CD8-positive, alpha-beta T cell (primary cell): ENCODE measurements at regions of chr15 and their contacts with region 1.

Region 1: DNA sequence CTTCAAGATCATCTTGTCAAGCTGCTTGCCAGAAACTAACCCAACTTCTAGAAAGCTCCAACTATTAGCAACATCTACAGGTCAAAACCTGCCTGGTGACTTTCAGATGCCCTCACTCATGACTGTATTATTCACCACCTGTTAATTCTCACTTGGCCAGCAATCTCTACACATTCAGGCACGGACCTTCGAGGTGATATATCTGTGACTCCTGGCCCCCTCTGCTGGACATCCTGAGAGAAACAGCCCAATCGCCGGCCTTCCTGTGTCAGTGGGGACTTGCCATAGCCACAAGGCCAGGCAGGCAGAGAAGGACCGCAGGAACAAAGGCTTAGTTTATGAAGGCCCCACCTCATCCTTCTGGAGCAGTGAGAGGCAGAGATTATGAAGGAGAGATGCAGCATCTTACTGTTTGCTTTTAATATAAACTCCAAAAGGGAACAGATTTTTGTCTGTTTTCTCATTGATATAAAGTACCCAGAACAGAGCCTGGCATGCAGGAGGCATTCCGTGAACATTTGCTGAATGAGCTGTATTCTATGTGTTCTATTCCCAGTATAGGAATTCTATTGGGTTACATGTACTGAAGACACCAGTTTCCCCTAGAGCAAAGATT is 24.4 kb upstream of the OCA2 start:
- DNase-seq: peak in 8 of 9 experiments; percentile 42 to 75 (median 56)
- ATAC-seq: peak; percentile 58
- H3K4me3 ChIP-seq: no peak overlapping the region
- H3K4me3 Mint-ChIP-seq: no peak overlapping the region
- H3K27ac ChIP-seq: no peak overlapping the region
- H3K27ac Mint-ChIP-seq: no peak overlapping the region
- H3K4me1 ChIP-seq: no peaks in the 10 kb centered on the region
- H3K4me1 Mint-ChIP-seq: no peaks in the 10 kb centered on the region
- H3K27me3 ChIP-seq: no peaks in the 10 kb centered on the region
- H3K27me3 Mint-ChIP-seq: no peaks in the 10 kb centered on the region
- CTCF ChIP-seq: peak; percentile 44

Region 2: GRCh38 chr15:28086175-28086703 is 37.3 kb before region 1 on chr15:
- CTCF ChIA-PET with region 1: interaction called, 3 read pairs
- POLR2A ChIA-PET with region 1: no interaction called
- intact Hi-C with region 1: loop called (anchors 1 kb)
- DNase-seq: peak in 8 of 9 experiments; percentile 45 to 79 (median 64)
- ATAC-seq: peak; percentile 100
- H3K4me3 ChIP-seq: no peak overlapping the region
- H3K4me3 Mint-ChIP-seq: no peak overlapping the region
- H3K27ac ChIP-seq: no peak overlapping the region
- H3K27ac Mint-ChIP-seq: no peak overlapping the region
- H3K4me1 ChIP-seq: no peaks in the 10 kb centered on the region
- H3K4me1 Mint-ChIP-seq: peaks cover 6% of the 10 kb centered on the region
- H3K27me3 ChIP-seq: peaks cover 0 to 2% of the 10 kb centered on the region in 2 experiments
- H3K27me3 Mint-ChIP-seq: peaks cover 40% of the 10 kb centered on the region
- CTCF ChIP-seq: peak; percentile 67

Region 3: DNA sequence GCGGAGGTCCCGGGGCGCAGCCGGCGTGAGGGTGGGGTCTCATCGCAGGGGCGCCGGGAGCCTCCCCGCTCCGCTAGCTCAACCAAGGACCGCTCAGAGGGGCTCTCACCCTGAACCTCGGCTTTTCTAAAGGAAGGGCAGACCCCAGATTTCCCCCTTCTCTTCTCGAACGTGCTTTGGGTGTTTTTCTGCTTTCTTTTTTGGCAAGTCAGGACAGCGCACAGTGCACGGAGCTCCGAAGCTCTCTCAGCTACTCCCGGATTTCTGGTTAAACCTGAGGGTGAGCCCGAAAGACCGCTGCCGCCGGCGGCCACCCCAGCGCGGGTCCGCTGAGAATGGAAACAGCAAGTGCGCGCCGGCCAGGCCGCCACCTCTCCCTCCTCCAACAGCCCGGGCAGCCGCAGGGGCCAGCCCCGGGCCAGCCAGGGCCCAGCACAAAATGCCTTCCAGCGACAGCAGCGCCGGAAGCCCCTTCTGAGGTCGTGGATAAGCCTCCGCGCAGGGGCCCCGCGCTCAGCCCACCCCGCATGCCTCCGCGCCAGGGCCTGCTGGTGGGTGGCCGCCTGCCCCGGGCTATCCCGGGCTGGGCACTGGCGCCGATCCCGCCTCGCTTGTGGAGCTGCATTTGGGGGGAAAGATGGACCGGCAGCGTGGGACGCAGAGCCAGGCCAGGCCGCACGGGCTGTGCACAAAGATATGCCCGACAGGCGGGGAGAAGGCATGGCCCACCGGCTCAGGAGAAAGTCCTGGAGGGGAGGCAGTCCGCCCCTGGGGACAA is 16.2 kb before region 1 on chr15:
- CTCF ChIA-PET with region 1: interaction called, 12 read pairs
- POLR2A ChIA-PET with region 1: no interaction called
- intact Hi-C with region 1: no loop called
- DNase-seq: peak in 2 of 9 experiments; percentile 31 to 35
- ATAC-seq: peak; percentile 54
- H3K4me3 ChIP-seq: peak overlapping the region; percentile 49 to 53
- H3K4me3 Mint-ChIP-seq: peak overlapping the region; percentile 90
- H3K27ac ChIP-seq: no peak overlapping the region
- H3K27ac Mint-ChIP-seq: peak overlapping the region; percentile 70
- H3K4me1 ChIP-seq: peaks cover 21% of the 10 kb centered on the region
- H3K4me1 Mint-ChIP-seq: peaks cover 13% of the 10 kb centered on the region
- H3K27me3 ChIP-seq: peaks cover 2 to 14% of the 10 kb centered on the region in 2 experiments
- H3K27me3 Mint-ChIP-seq: peaks cover 26% of the 10 kb centered on the region
- CTCF ChIP-seq: no peak

Region 4: GRCh38 chr15:28219116-28219515 is 95.6 kb after region 1 on chr15:
- CTCF ChIA-PET with region 1: no interaction called
- POLR2A ChIA-PET with region 1: no interaction called
- intact Hi-C with region 1: loop called in 1 of 2 experiments (anchors 10 kb)
- DNase-seq: no peak
- ATAC-seq: no peak
- H3K4me3 ChIP-seq: no peak overlapping the region
- H3K4me3 Mint-ChIP-seq: no peak overlapping the region
- H3K27ac ChIP-seq: no peak overlapping the region
- H3K27ac Mint-ChIP-seq: no peak overlapping the region
- H3K4me1 ChIP-seq: no peaks in the 10 kb centered on the region
- H3K4me1 Mint-ChIP-seq: no peaks in the 10 kb centered on the region
- H3K27me3 ChIP-seq: no peaks in the 10 kb centered on the region
- H3K27me3 Mint-ChIP-seq: no peaks in the 10 kb centered on the region
- CTCF ChIP-seq: no peak